BJ (cell line): ENCODE measurements at regions of chr11 and their contacts with region 1.

Region 1: GRCh38 chr11:70755410-70756161 is 357.3 kb downstream of the CTTN start:
- DNase-seq: peak; percentile 4
- H3K4me3 ChIP-seq: no peak overlapping the region
- H3K27me3 ChIP-seq: peaks cover 5% of the 10 kb centered on the region
- CTCF ChIP-seq: peak; percentile 99

Region 2: GRCh38 chr11:70326365-70326811 is 429.2 kb before region 1 on chr11:
- CTCF ChIA-PET with region 1: no interaction called
- POLR2A ChIA-PET with region 1: no interaction called
- DNase-seq: peak; percentile 37
- H3K4me3 ChIP-seq: no peak overlapping the region
- H3K27me3 ChIP-seq: no peaks in the 10 kb centered on the region
- CTCF ChIP-seq: no peak

Region 3: DNA sequence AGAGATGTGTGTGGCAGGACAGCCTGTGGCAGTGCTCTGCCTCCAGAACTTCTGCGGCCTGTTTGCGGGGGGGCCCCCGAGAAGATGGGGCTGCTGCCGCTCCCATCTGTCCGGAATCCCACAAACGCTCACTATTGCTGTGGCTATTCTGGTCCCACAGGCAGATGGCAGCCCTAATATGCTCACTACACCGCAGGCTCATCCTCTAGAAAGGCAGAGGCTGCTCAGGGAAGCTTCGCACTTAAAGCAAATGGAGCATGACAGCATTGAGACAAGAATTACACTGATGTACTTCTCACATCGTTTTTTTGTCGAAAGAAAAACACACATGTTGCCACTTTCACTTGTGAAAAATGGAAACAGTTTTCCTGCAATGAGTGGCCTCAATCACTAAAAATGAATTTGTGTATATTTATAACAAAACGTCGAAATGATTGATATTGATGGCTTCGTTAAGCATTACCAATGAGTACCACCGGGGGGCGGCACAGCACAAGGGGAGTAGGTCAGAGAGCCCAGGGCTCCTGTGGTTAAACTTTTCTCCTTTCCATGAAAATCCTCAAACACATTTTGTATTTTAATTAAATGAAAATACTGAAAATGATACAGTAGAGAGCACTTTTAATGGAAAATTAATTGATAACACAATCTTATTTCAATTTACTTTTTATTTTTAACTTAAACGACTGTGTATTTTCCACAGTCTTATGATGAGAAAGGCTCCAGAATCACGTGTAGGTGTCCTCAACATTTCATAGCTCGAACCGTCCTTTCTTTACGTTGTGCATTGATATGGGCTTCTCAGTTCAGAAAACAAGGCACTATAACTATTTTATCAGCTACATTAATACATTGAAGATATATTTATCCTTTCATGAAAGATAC is 288.1 kb before region 1 on chr11:
- CTCF ChIA-PET with region 1: interaction called, 54 read pairs
- POLR2A ChIA-PET with region 1: no interaction called
- DNase-seq: no peak
- H3K4me3 ChIP-seq: no peak overlapping the region
- H3K27me3 ChIP-seq: peaks cover 1% of the 10 kb centered on the region; the same call in 1 of the 2 replicates
- CTCF ChIP-seq: peak; percentile 86

Region 4: GRCh38 chr11:71076525-71077304 is 321.1 kb after region 1 on chr11:
- CTCF ChIA-PET with region 1: no interaction called
- POLR2A ChIA-PET with region 1: interaction called, 21 read pairs
- DNase-seq: no peak
- H3K4me3 ChIP-seq: no peak overlapping the region
- H3K27me3 ChIP-seq: no peaks in the 10 kb centered on the region
- CTCF ChIP-seq: no peak